ENCODE measurements at regions of chr2 and their contacts with region 1.

Region 1: DNA sequence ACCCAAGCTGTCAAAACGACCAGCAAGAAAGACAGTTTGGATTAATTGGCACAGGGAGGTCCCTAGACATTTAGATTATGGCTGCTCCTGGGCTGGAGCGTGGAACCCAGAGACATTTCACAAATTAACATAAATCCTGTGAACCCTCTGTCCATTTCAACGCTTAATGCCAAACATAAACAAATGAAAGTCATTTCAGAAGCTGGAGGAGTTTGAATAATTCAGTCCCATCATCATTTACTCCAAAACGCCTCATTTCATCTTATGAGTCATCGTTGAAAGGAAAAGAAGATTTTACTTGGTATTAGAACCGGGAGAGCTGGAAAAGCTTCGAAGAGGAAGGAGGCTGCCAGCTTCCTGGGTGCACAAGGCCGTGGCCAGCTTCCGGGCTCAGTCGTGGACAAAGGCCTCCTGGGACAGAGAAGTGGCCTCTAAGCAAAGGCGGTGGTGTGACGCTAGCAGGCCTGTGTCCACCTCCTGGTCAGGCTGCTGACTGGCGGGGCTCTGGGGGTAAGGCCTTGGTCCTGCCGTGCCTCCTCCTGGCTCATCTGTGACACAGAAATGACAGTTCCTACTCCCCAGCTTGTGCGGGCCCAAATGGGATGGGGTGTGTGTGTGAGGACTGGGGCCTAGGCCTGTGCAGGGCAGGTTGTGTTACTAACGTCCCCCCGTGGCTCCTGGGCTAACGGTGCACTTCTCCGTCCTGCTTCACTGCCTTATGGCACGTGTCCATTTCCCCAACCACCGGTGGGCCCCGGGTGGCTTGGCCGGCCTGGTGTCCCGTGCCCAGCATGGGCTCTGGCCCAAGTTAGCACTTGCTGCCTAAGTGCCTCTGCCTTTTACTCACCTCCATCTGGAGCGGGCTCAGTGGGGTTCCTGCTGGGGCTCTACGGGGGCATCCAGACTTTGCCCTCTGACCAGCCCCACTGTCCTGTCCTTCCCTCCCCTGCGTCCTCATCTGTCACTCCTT is 71.6 kb downstream of the RRM2 start:
- DNase-seq: no peak
- H3K4me3 ChIP-seq: no peak overlapping the region
- H3K27ac ChIP-seq: no peak overlapping the region
- H3K4me1 ChIP-seq: no peaks in the 10 kb centered on the region
- H3K27me3 ChIP-seq: no peaks in the 10 kb centered on the region
- CTCF ChIP-seq: no peak

Region 2: DNA sequence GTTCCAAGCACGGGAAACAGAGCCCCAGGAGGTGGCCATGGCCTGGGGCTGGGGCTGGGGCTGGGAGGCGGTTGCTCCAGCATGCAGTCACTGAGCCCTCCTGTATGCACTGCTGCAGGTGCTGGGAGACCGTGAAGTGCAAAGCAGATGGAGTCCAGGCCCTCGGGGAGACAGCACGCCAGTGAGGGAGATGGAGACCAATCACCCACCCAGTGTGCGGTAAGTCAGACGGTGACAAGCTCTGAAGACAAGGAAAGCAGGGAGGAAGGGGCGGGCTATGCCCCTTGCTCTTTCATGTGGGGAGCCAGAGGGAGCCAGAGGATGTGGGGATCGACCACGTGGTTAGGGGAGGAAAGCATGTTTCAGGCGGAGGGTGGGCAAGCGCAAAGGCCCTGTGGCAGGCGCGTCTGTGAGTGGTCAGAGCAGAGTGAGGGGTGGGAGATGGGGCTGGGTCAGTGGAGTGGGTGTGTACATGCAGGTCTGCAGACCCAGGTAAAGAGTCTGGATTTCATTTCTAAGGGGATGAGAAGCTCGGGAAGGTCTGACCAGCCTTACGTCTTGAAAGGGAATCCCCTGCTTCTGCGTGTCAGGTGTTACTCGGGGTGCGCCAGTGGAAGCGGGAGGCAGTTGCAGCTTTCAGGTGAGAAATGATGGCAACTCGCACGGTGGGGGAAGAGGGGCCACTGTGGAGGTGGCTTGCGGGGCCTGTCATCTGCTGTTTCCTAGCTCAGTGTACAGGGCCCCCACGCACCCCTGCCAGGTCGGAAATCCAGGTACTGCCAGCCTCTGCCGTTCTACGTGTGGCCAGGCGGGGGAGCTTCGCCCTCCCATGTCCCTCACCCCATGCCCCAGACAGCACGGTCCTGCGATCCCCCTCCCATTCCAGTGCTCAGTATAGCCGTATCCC is 52.1 kb before region 1 on chr2:
- CTCF ChIA-PET with region 1: no interaction called
- dilution Hi-C with region 1: loop called (anchors 5 kb)
- in situ Hi-C with region 1: no loop called
- intact Hi-C with region 1: no loop called
- DNase-seq: no peak
- H3K4me3 ChIP-seq: no peak overlapping the region
- H3K27ac ChIP-seq: no peak overlapping the region
- H3K4me1 ChIP-seq: peaks cover 10% of the 10 kb centered on the region
- H3K27me3 ChIP-seq: no peaks in the 10 kb centered on the region
- CTCF ChIP-seq: peak; percentile 49 to 70

Region 3: GRCh38 chr2:10162586-10163497 is 31.3 kb before region 1 on chr2:
- CTCF ChIA-PET with region 1: no interaction called
- dilution Hi-C with region 1: no loop called
- in situ Hi-C with region 1: no loop called
- intact Hi-C with region 1: no loop called
- DNase-seq: no peak
- H3K4me3 ChIP-seq: no peak overlapping the region
- H3K27ac ChIP-seq: no peak overlapping the region
- H3K4me1 ChIP-seq: peaks cover 3% of the 10 kb centered on the region
- H3K27me3 ChIP-seq: no peaks in the 10 kb centered on the region
- CTCF ChIP-seq: peak in 1 of 2 donors; percentile 9

Region 4: DNA sequence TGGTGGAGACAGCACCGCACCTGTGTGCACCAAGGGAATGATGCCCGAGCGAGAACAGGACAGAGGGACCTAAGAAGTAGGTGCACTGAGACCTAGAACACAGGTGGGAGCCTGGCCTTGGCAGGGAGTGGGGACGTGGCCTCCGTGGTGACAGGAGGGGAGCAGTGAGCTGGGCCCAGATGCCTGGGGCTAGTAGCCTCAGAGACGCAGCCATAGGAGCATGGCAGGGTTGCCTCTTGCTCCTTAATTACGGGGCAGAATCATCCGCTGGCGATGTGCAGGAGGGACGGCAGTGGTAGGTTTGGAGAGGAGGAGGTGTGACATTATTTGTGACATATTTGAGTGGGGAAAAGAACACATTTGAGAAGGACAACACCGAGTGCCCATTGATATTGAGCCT is 51.5 kb after region 1 on chr2:
- CTCF ChIA-PET with region 1: no interaction called
- dilution Hi-C with region 1: loop called (anchors 5 kb)
- in situ Hi-C with region 1: no loop called
- intact Hi-C with region 1: no loop called
- DNase-seq: no peak
- H3K4me3 ChIP-seq: no peak overlapping the region
- H3K27ac ChIP-seq: no peak overlapping the region
- H3K4me1 ChIP-seq: no peaks in the 10 kb centered on the region
- H3K27me3 ChIP-seq: no peaks in the 10 kb centered on the region
- CTCF ChIP-seq: no peak

Region 5: DNA sequence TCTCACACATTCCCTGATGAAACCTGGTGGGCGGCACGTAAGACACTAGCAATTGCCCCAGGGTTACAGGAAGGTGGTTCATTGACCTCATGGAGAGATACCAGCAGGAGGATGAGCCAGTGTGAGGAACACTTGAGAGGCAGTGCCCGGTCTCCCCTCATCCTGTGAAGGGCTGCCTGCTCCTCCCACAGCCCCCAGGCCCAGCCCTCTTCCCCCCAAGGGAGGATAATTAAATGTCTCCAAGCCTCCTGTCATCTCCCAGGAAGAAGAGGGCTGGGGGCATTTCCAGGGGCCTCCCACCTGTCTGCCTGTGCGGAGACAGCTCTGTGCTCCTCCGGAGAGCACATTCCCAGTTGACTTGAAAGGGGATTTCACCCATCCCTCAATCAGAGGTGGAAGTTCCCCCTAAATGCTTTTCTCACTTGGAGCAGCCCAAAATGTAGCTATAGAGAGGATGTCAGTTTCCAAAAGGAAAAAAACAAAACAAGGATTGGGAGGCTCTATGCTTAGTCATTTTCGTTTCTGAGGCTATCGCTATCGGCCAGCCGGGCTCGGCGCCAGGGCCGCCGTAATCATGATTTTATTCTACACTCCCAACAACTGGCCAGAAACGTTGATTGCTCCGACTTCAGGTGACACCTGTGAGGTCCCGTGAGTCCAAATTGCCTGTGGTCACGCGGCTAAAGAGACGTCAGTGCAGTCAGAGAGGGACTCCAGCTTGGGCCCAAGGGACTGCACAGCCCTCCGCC is 724.7 kb after region 1 on chr2:
- CTCF ChIA-PET with region 1: no interaction called
- dilution Hi-C with region 1: no loop called
- in situ Hi-C with region 1: no loop called
- intact Hi-C with region 1: no loop called
- DNase-seq: no peak
- H3K4me3 ChIP-seq: no peak overlapping the region
- H3K27ac ChIP-seq: no peak overlapping the region
- H3K4me1 ChIP-seq: no peaks in the 10 kb centered on the region
- H3K27me3 ChIP-seq: peaks cover 2% of the 10 kb centered on the region
- CTCF ChIP-seq: no peak

Measured in mammary epithelial cell (primary cell).